ENCODE measurements at regions of chr4 and their contacts with region 1.

Region 1: GRCh38 chr4:102826890-102827673 is at the start of gene UBE2D3:
- DNase-seq: peak in 9 of 10 donors; percentile 88 to 98 (median 94)
- ATAC-seq: peak; percentile 49
- H3K4me3 Mint-ChIP-seq: no peak within 1 kb of the TSS
- H3K27ac Mint-ChIP-seq: no peak within 1 kb of the TSS
- H3K4me1 Mint-ChIP-seq: peaks cover 19 to 43% (median 38%) of the 10 kb centered on the region in 4 donors
- H3K27me3 Mint-ChIP-seq: peaks cover 0 to 5% (median 0%) of the 10 kb centered on the region in 5 donors
- polyA plus RNA-seq, gene UBE2D3: 415 to 475 (median 426) TPM

Region 2: DNA sequence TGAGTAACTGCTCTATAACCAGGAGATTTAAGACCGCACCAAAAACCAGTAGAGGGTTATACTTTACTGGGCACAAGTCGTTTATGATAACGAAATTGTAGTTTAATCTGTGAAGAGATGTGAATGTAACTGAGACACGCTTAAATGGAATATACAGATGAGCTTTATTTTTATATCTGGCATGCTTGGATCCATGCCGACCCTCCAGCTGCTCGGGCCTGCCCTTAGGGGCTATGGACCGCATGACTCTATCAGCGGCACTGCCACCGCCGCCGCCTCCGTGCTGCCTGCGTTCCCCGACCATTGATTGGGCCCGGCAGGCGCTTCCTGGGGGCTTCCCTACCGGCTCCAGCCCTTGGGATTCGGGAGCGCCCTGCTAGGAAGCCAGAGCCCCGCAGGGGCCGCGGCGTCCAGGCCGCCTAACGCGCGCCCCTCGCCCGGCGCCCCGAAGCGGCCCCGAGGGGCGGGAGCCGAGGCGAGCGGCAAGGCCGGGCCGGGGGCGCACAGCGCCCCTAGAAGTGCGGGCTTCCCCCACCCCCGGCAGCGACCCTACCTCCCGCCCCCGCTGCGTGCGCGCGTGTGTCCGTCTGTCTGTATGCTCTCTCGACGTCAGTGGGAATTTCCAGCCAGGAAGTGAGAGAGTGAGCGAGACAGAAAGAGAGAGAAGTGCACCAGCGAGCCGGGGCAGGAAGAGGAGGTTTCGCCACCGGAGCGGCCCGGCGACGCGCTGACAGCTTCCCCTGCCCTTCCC is 326.2 kb before region 1 on chr4 and contains the start of gene NFKB1:
- POLR2A ChIA-PET with region 1: interaction called, 23 read pairs
- DNase-seq: peak; percentile 71 to 93 (median 86)
- ATAC-seq: peak; percentile 68 to 73
- H3K4me3 Mint-ChIP-seq: peak within 1 kb of the TSS; percentile 89 to 99 (median 94)
- H3K27ac Mint-ChIP-seq: peak within 1 kb of the TSS; percentile 87 to 100 (median 98)
- H3K4me1 Mint-ChIP-seq: peaks cover 12 to 42% (median 30%) of the 10 kb centered on the region in 4 donors
- H3K27me3 Mint-ChIP-seq: no peaks in the 10 kb centered on the region
- polyA plus RNA-seq, gene NFKB1: 27.5 to 82.2 (median 32.4) TPM

Region 3: GRCh38 chr4:102632241-102633065 is 194.6 kb before region 1 on chr4:
- POLR2A ChIA-PET with region 1: interaction called, 30 read pairs
- DNase-seq: no peak
- ATAC-seq: no peak
- H3K4me3 Mint-ChIP-seq: peak overlapping the region in 2 of 10 donors; percentile 60 to 72
- H3K27ac Mint-ChIP-seq: peak overlapping the region; percentile 74 to 98 (median 96)
- H3K4me1 Mint-ChIP-seq: peaks cover 22 to 57% (median 51%) of the 10 kb centered on the region in 4 donors
- H3K27me3 Mint-ChIP-seq: no peaks in the 10 kb centered on the region

Region 4: GRCh38 chr4:102809190-102809589 is 17.9 kb before region 1 on chr4:
- POLR2A ChIA-PET with region 1: interaction called, 89 read pairs
- DNase-seq: peak in 1 of 10 donors; percentile 28
- ATAC-seq: peak; percentile 79 to 84
- H3K4me3 Mint-ChIP-seq: peak overlapping the region in 7 of 10 donors; percentile 3 to 57 (median 9)
- H3K27ac Mint-ChIP-seq: peak overlapping the region; percentile 11 to 82 (median 56)
- H3K4me1 Mint-ChIP-seq: peaks cover 27 to 87% (median 79%) of the 10 kb centered on the region in 4 donors
- H3K27me3 Mint-ChIP-seq: no peaks in the 10 kb centered on the region

Region 5: DNA sequence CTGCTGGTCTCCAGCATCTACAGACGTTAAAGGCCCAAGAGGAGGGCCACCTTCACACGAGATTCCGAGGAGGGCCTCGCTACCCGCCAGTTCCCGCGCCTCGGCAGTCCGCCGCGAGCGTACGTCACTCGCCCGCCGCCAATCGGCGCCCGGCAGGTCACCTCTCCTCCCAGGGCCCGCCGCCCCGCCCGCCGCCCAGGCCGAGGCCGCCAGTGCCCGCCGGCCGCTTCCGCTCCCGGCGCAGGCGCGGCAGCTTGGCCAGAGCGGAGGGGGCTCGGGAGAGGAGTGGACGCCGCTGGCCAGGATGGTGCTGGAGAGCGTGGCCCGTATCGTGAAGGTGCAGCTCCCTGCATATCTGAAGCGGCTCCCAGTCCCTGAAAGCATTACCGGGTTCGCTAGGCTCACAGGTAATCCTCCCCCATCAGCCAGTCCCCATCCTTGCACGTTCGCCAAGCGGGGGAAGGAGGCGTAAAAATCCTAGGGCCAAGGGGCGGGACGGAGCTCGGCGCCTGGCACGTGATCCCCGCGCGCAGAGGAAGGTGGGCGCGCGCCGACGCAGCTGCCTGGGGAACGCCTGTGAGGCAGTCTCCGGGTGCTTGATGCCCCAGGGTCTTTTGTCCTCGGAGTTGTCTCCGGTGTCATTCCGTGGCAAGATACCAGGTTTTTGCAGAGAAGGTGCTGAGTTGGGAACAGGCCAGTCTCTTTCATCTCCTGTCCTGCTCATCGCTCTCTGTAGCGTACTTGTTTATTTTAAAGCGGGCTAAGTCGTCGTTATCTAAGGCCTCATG is 41.9 kb after region 1 on chr4 and contains the start of gene CISD2:
- POLR2A ChIA-PET with region 1: interaction called, 237 read pairs
- DNase-seq: peak; percentile 86 to 97 (median 94)
- ATAC-seq: peak; percentile 83 to 88
- H3K4me3 Mint-ChIP-seq: peak within 1 kb of the TSS; percentile 85 to 99 (median 97)
- H3K27ac Mint-ChIP-seq: peak within 1 kb of the TSS; percentile 95 to 100 (median 99)
- H3K4me1 Mint-ChIP-seq: peaks cover 15 to 74% (median 51%) of the 10 kb centered on the region in 4 donors
- H3K27me3 Mint-ChIP-seq: no peaks in the 10 kb centered on the region
- polyA plus RNA-seq, gene CISD2: 20.2 to 30.5 (median 24.6) TPM

Region 6: GRCh38 chr4:103075901-103076739 is 249.0 kb after region 1 on chr4:
- POLR2A ChIA-PET with region 1: interaction called, 16 read pairs
- DNase-seq: peak; percentile 37 to 82 (median 72)
- ATAC-seq: peak; percentile 74 to 80
- H3K4me3 Mint-ChIP-seq: peak overlapping the region; percentile 85 to 99 (median 98)
- H3K27ac Mint-ChIP-seq: peak overlapping the region; percentile 94 to 99 (median 99)
- H3K4me1 Mint-ChIP-seq: peaks cover 18 to 49% (median 48%) of the 10 kb centered on the region in 4 donors
- H3K27me3 Mint-ChIP-seq: no peaks in the 10 kb centered on the region

Measured in naive thymus-derived CD8-positive, alpha-beta T cell (primary cell).